ENCODE measurements at regions of chr15 and their contacts with region 1.

Region 1: DNA sequence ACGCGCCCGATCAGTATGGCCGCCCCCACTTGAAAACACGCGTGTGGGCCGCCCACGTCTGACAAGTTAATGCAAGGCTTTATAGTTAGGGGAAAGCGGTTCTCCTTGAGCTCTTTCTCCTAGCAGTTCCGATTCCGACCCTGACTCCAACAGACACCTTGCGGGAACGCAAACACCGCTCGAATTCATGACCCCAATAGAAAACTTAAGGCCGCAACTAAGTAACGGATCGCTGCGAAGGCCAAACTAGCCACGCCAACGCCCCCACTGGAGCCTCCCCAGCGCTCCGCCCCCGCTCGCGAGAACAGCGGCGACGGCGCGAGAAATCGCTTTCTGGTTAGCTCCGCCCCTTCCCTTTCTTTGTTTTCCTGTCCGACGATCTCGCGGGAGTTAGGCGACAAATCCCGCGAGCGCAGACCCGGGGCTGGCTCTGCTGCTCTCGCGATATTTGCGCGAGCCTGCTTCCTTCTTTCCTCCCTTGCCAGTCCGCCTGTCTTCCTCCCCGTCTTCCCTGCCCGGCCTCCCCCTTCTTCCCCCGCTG is at the start of gene IREB2:
- DNase-seq: peak; percentile 94
- ATAC-seq: peak; percentile 93
- H3K4me3 ChIP-seq: peak within 1 kb of the TSS; percentile 98
- H3K27ac ChIP-seq: peak within 1 kb of the TSS; percentile 95
- H3K4me1 ChIP-seq: 0 out of 2 replicates have a peak, but pooled peaks cover 8% of the 10 kb centered on the region
- H3K27me3 ChIP-seq: no peaks in the 10 kb centered on the region
- CTCF ChIP-seq: no peak
- EP300 ChIP-seq: no peak
- POLR2A ChIP-seq: peak; percentile 89
- RAD21 ChIP-seq: no peak
- polyA plus RNA-seq, gene IREB2: 13.0 to 13.9 TPM

Region 2: DNA sequence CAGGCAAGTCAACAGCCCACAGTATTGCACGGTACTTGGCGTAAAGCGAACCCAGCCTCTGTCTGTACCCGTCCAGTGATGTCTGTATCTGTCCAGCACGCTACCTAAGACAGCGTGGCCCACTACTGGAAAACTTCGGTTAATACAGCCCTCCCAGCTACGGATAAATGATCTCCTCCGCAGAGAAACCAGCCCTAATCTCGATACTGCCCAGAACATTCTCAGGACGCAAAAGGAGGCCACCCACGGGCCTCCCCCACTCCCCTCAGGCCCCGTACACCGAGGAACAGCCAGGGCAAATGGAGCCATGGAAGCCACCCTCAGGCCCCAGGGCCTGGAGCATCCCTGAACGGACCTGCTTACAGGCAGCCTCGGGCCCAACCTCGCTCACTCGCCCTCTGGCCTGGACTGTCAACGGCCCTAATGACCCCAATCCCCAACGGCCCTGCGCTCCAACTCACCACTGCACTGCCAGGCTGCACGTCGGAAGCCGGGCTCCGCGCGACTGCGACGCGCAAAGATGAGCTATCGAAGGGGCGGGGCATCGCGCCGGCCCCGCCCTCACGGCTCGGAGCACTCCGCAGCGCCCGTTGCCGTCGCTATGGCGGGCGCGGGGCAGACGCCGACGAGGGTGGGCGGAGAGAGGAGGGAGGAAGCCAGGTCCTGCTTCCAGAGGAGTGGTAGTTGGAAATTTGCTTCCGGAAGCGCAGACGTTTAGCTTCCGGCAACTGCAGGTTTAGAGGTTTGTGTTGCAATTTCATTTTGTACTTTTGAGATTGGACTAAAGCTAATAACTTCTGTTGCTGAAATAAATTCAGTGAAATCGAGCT is 138.5 kb before region 1 on chr15 and contains the start of gene SKIC8:
- CTCF ChIA-PET with region 1: interaction called, 4 read pairs
- POLR2A ChIA-PET with region 1: interaction called, 12 read pairs
- RAD21 ChIA-PET with region 1: interaction called, 6 read pairs
- SMC1A ChIA-PET with region 1: interaction called, 4 read pairs
- in situ Hi-C with region 1: no loop called
- intact Hi-C with region 1: no loop called
- DNase-seq: peak; percentile 71
- ATAC-seq: peak; percentile 91
- H3K4me3 ChIP-seq: peak within 1 kb of the TSS; percentile 95
- H3K27ac ChIP-seq: peak within 1 kb of the TSS; percentile 73
- H3K4me1 ChIP-seq: peaks cover 3% of the 10 kb centered on the region
- H3K27me3 ChIP-seq: no peaks in the 10 kb centered on the region
- CTCF ChIP-seq: no peak
- EP300 ChIP-seq: no peak
- POLR2A ChIP-seq: peak; percentile 99
- RAD21 ChIP-seq: no peak
- polyA plus RNA-seq, gene SKIC8: 214 to 288 TPM

Region 3: GRCh38 chr15:78308422-78309032 is 129.3 kb before region 1 on chr15:
- CTCF ChIA-PET with region 1: no interaction called
- POLR2A ChIA-PET with region 1: no interaction called
- RAD21 ChIA-PET with region 1: no interaction called
- SMC1A ChIA-PET with region 1: interaction called, 4 read pairs
- in situ Hi-C with region 1: loop called (anchors 5 kb)
- intact Hi-C with region 1: no loop called
- DNase-seq: no peak
- ATAC-seq: peak; percentile 96
- H3K4me3 ChIP-seq: no peak overlapping the region
- H3K27ac ChIP-seq: no peak overlapping the region
- H3K4me1 ChIP-seq: no peaks in the 10 kb centered on the region
- H3K27me3 ChIP-seq: no peaks in the 10 kb centered on the region
- CTCF ChIP-seq: peak; percentile 74 to 95 (median 90)
- EP300 ChIP-seq: no peak
- POLR2A ChIP-seq: no peak
- RAD21 ChIP-seq: peak; percentile 85

Region 4: GRCh38 chr15:78402061-78402610 is 35.7 kb before region 1 on chr15:
- CTCF ChIA-PET with region 1: no interaction called
- POLR2A ChIA-PET with region 1: no interaction called
- RAD21 ChIA-PET with region 1: no interaction called
- SMC1A ChIA-PET with region 1: no interaction called
- in situ Hi-C with region 1: no loop called
- intact Hi-C with region 1: no loop called
- DNase-seq: no peak
- ATAC-seq: no peak
- H3K4me3 ChIP-seq: no peak overlapping the region
- H3K27ac ChIP-seq: no peak overlapping the region
- H3K4me1 ChIP-seq: no peaks in the 10 kb centered on the region
- H3K27me3 ChIP-seq: no peaks in the 10 kb centered on the region; a peak in 2 of 4 replicates
- CTCF ChIP-seq: no peak
- EP300 ChIP-seq: no peak
- POLR2A ChIP-seq: no peak
- RAD21 ChIP-seq: no peak

Region 5: DNA sequence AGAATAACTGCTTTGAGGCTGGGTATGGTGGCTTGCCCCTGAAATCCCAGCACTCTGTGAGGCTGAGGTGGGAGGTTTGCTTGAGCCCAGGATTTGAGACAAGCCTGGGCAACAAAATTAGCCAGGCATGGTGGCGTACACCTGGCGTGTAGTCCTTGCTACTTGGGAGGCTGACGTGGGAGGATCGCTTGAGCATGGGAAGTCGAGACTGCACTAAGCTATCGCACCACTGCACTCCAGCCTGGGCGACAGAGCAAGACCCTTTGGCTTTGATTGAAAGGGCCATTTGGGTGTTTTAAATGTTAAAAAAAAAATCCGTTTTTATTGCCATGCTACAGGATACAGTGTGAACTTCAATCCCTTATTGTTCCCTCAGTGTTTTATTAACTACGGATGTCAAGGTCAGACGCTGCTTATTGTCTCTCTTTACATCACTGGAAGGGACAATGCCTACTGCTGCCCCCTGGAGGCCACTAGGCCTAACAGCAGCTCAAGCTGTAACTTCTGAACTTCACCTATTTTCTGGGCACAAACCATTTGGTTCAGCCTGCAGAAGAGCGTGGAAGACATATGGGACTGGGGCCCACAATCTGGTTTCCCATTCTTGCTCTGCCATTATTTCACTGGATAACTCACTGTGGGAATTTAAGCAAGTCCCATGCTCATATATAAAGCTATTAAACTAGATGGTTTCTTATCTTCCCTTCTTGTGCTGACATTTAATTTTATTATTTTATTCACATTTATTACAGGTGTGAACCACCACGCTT is 15.1 kb before region 1 on chr15:
- CTCF ChIA-PET with region 1: interaction called, 20 read pairs
- POLR2A ChIA-PET with region 1: interaction called, 5 read pairs
- RAD21 ChIA-PET with region 1: interaction called, 6 read pairs
- SMC1A ChIA-PET with region 1: interaction called, 9 read pairs
- in situ Hi-C with region 1: no loop called
- intact Hi-C with region 1: no loop called
- DNase-seq: no peak
- ATAC-seq: peak; percentile 90
- H3K4me3 ChIP-seq: no peak overlapping the region
- H3K27ac ChIP-seq: no peak overlapping the region
- H3K4me1 ChIP-seq: no peaks in the 10 kb centered on the region
- H3K27me3 ChIP-seq: no peaks in the 10 kb centered on the region
- CTCF ChIP-seq: peak; percentile 90 to 94 (median 94)
- EP300 ChIP-seq: no peak
- POLR2A ChIP-seq: no peak
- RAD21 ChIP-seq: peak; percentile 69

Region 6: GRCh38 chr15:78449220-78449999 is 11.6 kb after region 1 on chr15:
- CTCF ChIA-PET with region 1: interaction called, 19 read pairs
- POLR2A ChIA-PET with region 1: interaction called, 3 read pairs
- RAD21 ChIA-PET with region 1: interaction called, 7 read pairs
- SMC1A ChIA-PET with region 1: interaction called, 7 read pairs
- in situ Hi-C with region 1: no loop called
- intact Hi-C with region 1: no loop called
- DNase-seq: no peak
- ATAC-seq: no peak
- H3K4me3 ChIP-seq: no peak overlapping the region
- H3K27ac ChIP-seq: no peak overlapping the region
- H3K4me1 ChIP-seq: peaks cover 7% of the 10 kb centered on the region; the same call in 1 of the 2 replicates
- H3K27me3 ChIP-seq: no peaks in the 10 kb centered on the region
- CTCF ChIP-seq: no peak
- EP300 ChIP-seq: no peak
- POLR2A ChIP-seq: no peak
- RAD21 ChIP-seq: no peak

Region 7: DNA sequence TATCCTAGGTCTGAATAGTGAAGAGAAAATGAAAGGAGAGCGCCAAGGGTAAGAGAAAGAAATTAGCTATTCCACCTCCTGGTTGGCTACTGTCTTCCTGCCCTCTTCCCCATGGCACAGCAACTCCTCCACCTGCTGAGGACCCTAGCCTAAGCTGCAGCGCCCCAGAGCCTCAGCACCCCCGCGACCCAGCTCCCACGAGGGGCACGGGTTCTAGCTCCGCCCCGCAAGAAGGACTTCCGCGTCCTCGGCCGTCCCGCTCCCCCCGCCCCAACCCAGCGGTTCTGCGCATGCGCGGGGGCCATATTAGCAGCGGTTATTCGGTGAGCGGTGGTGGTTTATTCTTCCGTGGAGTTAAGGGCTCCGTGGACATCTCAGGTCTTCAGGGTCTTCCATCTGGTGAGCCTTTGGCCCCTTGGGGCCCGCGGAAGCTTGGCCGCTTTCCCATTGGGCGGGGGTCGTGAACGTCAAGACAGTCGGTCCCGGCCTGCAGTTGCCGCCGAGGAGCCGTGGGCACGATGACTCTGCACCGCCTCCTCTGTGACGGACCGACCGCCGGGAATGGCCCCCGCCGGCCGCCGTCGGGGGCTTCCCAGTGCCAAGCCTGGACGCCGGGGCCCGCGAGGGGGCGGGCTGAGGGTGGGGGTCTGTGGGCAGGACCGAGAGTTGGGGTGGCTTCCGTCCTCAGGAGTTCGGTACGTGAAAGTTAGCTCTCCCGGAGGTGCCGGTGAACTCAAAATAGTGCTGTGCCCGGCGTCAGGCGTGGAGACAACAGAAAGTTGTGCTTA is 102.5 kb after region 1 on chr15 and contains the start of gene PSMA4:
- CTCF ChIA-PET with region 1: interaction called, 3 read pairs
- POLR2A ChIA-PET with region 1: interaction called, 13 read pairs
- RAD21 ChIA-PET with region 1: interaction called, 12 read pairs
- SMC1A ChIA-PET with region 1: interaction called, 4 read pairs
- in situ Hi-C with region 1: no loop called
- intact Hi-C with region 1: no loop called
- DNase-seq: peak; percentile 68
- ATAC-seq: peak; percentile 90
- H3K4me3 ChIP-seq: peak within 1 kb of the TSS; percentile 71
- H3K27ac ChIP-seq: peak within 1 kb of the TSS; percentile 96
- H3K4me1 ChIP-seq: peaks cover 3% of the 10 kb centered on the region; the same call in 1 of the 2 replicates
- H3K27me3 ChIP-seq: no peaks in the 10 kb centered on the region
- CTCF ChIP-seq: peak in 1 of 3 experiments; percentile 17; a peak in 1 of 6 replicates
- EP300 ChIP-seq: no peak
- POLR2A ChIP-seq: peak; percentile 93
- RAD21 ChIP-seq: no peak
- polyA plus RNA-seq, gene PSMA4: 1,117 to 1,221 TPM